PC-9 (cell line): ENCODE measurements at regions of chr15 and their contacts with region 1.

Region 1: GRCh38 chr15:63135804-63136203 is 14.1 kb downstream of the LACTB start:
- DNase-seq: peak; percentile 29 to 71
- H3K4me3 ChIP-seq: no peak overlapping the region
- H3K27ac ChIP-seq: peak overlapping the region; percentile 71
- H3K4me1 ChIP-seq: peaks cover 29% of the 10 kb centered on the region
- H3K27me3 ChIP-seq: no peaks in the 10 kb centered on the region
- CTCF ChIP-seq: no peak

Region 2: GRCh38 chr15:63166219-63166618 is 30.4 kb after region 1 on chr15:
- CTCF ChIA-PET with region 1: no interaction called
- POLR2A ChIA-PET with region 1: interaction called, 13 read pairs
- intact Hi-C with region 1: no loop called
- DNase-seq: no peak
- H3K4me3 ChIP-seq: no peak overlapping the region
- H3K27ac ChIP-seq: no peak overlapping the region
- H3K4me1 ChIP-seq: no peaks in the 10 kb centered on the region
- H3K27me3 ChIP-seq: no peaks in the 10 kb centered on the region
- CTCF ChIP-seq: no peak; the same call in 1 of the 2 replicates

Region 3: GRCh38 chr15:63172376-63173109 is 36.7 kb after region 1 on chr15:
- CTCF ChIA-PET with region 1: no interaction called
- POLR2A ChIA-PET with region 1: interaction called, 35 read pairs
- intact Hi-C with region 1: no loop called
- DNase-seq: no peak
- H3K4me3 ChIP-seq: no peak overlapping the region
- H3K27ac ChIP-seq: no peak overlapping the region
- H3K4me1 ChIP-seq: no peaks in the 10 kb centered on the region
- H3K27me3 ChIP-seq: no peaks in the 10 kb centered on the region
- CTCF ChIP-seq: no peak